ENCODE measurements at regions of chr5 and their contacts with region 1.

Region 1: DNA sequence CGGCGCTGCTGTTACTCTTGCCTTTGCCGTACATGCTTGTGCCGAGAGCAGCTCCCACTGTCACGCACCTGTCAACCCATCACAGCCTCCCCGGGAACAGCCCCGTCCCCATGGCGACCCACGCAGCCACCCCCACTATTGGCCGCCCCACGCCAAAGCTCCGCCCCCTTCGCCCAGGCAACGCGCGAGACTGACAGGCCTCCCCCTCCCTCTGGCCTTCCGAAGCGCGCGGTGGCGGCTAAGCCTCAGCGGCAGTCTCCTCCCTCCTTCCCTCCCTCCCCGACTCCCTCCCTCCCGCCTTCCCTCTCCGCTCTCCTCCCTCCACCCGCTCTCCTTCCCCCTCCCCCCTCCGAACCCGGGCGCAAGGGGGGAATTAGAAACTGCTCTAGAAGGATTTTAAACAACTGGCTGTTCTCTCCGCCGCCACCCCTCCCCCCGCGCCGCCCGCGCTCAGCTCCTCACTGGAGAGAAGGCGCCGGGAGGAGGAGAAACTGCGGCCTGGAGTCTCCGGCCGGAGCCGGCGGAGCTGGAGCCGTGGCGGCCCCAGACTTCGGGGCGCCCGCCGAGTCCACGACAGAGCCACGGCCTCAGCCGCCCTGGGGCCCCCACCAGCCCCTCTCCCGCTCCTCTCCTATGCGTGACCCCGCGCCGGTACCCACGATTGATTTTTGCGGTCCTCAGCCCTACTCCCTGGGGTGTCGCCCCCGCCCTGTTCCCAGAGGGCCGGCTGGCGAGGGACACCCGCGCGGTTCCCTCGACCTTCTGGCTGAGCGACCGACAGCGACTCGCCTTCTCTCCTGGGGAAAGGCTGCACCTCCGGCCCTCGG is at the start of gene SSBP2:
- DNase-seq: peak; percentile 100
- H3K4me3 ChIP-seq: peak within 1 kb of the TSS; percentile 79 to 99 (median 89)
- H3K27ac ChIP-seq: peak within 1 kb of the TSS; percentile 85 to 97 (median 94)
- H3K4me1 ChIP-seq: peaks cover 16 to 49% (median 27%) of the 10 kb centered on the region in 6 donors
- H3K27me3 ChIP-seq: peaks cover 0 to 7% (median 0%) of the 10 kb centered on the region in 7 donors
- CTCF ChIP-seq: peak in 1 of 11 experiments; percentile 16
- POLR2A ChIP-seq: peak in 2 of 3 donors; percentile 3 to 41
- total RNA-seq, gene SSBP2: 21.7 to 40.8 (median 34.4) TPM

Region 2: GRCh38 chr5:81506900-81507588 is 244.2 kb before region 1 on chr5:
- intact Hi-C with region 1: loop called (anchors 10 kb)
- DNase-seq: no peak
- H3K4me3 ChIP-seq: no peak overlapping the region
- H3K27ac ChIP-seq: peak overlapping the region in 4 of 8 donors; percentile 37 to 65 (median 59)
- H3K4me1 ChIP-seq: peaks cover 0 to 24% (median 11%) of the 10 kb centered on the region in 6 donors
- H3K27me3 ChIP-seq: no peaks in the 10 kb centered on the region
- CTCF ChIP-seq: peak; percentile 61 to 88 (median 80)
- POLR2A ChIP-seq: no peak

Region 3: GRCh38 chr5:81675846-81676245 is 75.4 kb before region 1 on chr5:
- intact Hi-C with region 1: no loop called
- DNase-seq: no peak
- H3K4me3 ChIP-seq: no peak overlapping the region
- H3K27ac ChIP-seq: no peak overlapping the region
- H3K4me1 ChIP-seq: no peaks in the 10 kb centered on the region
- H3K27me3 ChIP-seq: no peaks in the 10 kb centered on the region
- CTCF ChIP-seq: no peak
- POLR2A ChIP-seq: no peak

Region 4: DNA sequence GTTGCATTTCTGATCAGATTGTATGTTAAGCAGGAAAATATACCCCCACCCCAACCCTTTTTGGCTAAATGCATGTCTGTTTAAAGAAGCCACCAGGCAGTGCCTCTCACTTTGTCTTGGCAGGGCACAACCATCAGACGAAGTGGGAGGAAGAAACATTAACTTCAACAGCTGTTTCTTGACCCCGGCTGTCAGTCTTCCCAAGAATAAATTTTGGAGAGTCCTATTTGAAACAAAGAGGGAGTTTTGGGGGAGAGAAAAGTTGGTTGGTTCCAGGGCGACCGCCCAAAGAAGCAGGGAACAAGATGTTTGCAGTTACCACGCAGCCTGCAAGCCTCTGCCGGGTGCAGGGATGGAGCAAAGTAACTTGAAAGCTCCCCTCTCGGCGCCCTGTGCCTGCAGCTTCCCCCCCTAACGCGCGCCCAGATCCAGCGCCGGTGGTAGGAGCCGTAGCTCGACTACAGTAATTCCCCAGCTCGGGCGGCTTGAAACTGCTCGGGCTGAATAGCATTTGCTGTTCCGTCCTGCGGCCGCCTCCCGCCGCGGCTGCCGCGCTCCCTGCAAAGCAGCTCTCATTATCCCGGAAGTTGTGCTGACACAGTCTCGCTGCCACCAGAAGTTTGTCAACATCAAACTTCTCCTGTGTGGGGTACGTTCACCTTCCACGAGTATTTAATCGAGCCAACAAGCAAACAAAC is 100.4 kb after region 1 on chr5:
- intact Hi-C with region 1: loop called (anchors 5 kb)
- DNase-seq: peak; percentile 98
- H3K4me3 ChIP-seq: peak overlapping the region; percentile 41 to 75 (median 50)
- H3K27ac ChIP-seq: peak overlapping the region; percentile 85 to 93 (median 90)
- H3K4me1 ChIP-seq: peaks cover 19 to 36% (median 32%) of the 10 kb centered on the region in 6 donors
- H3K27me3 ChIP-seq: no peaks in the 10 kb centered on the region
- CTCF ChIP-seq: peak in 2 of 11 experiments; percentile 5 to 27
- POLR2A ChIP-seq: peak in 1 of 3 donors; percentile 32

Region 5: DNA sequence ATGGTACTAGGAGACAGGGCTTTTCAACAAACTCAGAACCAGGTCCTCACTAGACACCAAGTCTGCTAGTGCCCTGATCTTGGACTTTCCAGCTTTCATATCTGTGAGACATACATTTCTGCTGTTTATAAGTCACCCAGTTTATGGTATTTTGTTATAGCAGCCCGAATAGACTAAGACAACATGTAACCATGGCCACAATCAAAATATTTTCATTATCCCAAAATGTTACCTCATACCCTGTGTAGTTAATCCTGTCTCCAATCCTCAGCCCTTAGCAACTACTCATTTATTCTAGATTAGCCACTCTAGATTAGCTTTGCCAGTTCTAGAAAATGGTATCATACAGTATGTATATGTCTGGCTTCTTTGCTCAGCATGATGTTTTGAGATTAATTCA is 214.3 kb after region 1 on chr5:
- intact Hi-C with region 1: loop called (anchors 10 kb)
- DNase-seq: no peak
- H3K4me3 ChIP-seq: no peak overlapping the region
- H3K27ac ChIP-seq: no peak overlapping the region
- H3K4me1 ChIP-seq: peaks cover 0 to 2% (median 0%) of the 10 kb centered on the region in 6 donors
- H3K27me3 ChIP-seq: no peaks in the 10 kb centered on the region
- CTCF ChIP-seq: no peak
- POLR2A ChIP-seq: no peak